Activated CD8-positive, alpha-beta memory T cell treated with anti-CD3 and anti-CD28 coated beads, Interleukin-2, amount 10 ng/mL, durations not matched to agents 7 days and 5 days (primary cell): ENCODE measurements at regions of chr6 and their contacts with region 1.

Region 1: GRCh38 chr6:34161857-34162515 is 16.1 kb upstream of the GRM4 start:
- DNase-seq: no peak
- ATAC-seq: no peak
- H3K4me3 Mint-ChIP-seq: no peak overlapping the region
- H3K27ac Mint-ChIP-seq: no peak overlapping the region
- H3K4me1 Mint-ChIP-seq: peaks cover 2% of the 10 kb centered on the region
- H3K27me3 Mint-ChIP-seq: peaks cover 33% of the 10 kb centered on the region

Region 2: GRCh38 chr6:34174846-34175399 is 12.9 kb after region 1 on chr6:
- CTCF ChIA-PET with region 1: interaction called, 14 read pairs
- DNase-seq: no peak
- ATAC-seq: no peak
- H3K4me3 Mint-ChIP-seq: no peak overlapping the region
- H3K27ac Mint-ChIP-seq: no peak overlapping the region
- H3K4me1 Mint-ChIP-seq: no peaks in the 10 kb centered on the region
- H3K27me3 Mint-ChIP-seq: peaks cover 5% of the 10 kb centered on the region